ENCODE measurements at regions of chr2 and their contacts with region 1.

Region 1: GRCh38 chr2:17479875-17480274 is 38.4 kb downstream of the RAD51AP2 start:
- DNase-seq: peak; percentile 59
- H3K4me3 ChIP-seq: no peak overlapping the region
- H3K27ac ChIP-seq: no peak overlapping the region
- H3K4me1 ChIP-seq: peaks cover 33% of the 10 kb centered on the region
- H3K27me3 ChIP-seq: no peaks in the 10 kb centered on the region
- CTCF ChIP-seq: no peak

Region 2: DNA sequence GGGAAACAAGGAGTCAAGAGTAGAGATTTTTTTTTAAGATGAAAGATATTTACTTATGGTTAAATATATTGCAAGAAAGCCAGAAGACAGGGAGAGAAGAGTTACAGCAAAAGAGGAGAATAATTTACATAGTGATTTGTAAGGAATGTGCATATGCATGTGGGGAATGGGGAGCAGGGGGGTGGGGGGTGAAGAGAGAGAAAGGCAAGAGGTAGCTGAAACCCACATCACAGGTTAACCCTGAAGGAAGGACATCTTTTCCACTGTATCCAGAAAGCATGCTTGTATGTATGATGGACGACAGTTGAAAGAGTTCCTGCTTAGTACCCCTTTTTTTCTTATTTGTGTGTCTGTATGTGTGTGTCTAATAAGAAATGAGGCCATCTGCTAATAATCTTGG is 333.5 kb before region 1 on chr2:
- CTCF ChIA-PET with region 1: no interaction called
- dilution Hi-C with region 1: no loop called
- in situ Hi-C with region 1: no loop called
- intact Hi-C with region 1: no loop called
- DNase-seq: no peak
- H3K4me3 ChIP-seq: no peak overlapping the region
- H3K27ac ChIP-seq: no peak overlapping the region
- H3K4me1 ChIP-seq: no peaks in the 10 kb centered on the region
- H3K27me3 ChIP-seq: no peaks in the 10 kb centered on the region
- CTCF ChIP-seq: no peak

Region 3: DNA sequence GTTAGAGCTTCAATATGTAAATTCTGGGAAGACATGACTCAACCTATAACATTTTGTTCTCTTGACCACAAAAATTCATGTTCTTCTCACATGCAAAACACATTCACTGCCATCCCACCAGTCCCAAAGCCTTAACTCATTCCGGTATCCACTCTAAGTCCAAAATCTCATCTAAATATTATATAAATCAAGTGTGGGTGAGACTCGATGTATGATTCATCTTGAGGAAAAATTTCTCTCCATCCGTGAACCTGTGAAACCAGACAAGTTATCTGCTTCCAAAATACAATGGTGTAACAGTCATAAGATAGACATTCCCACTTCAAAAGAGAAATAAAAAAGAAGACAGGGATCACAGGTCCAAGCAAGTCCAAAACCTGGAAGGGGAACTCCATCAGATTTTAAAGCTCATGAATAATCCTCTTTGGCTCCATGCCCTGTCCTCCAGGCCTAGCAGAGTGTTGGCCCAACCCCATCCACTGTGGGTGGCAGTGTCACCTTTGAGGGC is 62.9 kb before region 1 on chr2:
- CTCF ChIA-PET with region 1: no interaction called
- dilution Hi-C with region 1: no loop called
- in situ Hi-C with region 1: no loop called
- intact Hi-C with region 1: no loop called
- DNase-seq: peak; percentile 99
- H3K4me3 ChIP-seq: no peak overlapping the region
- H3K27ac ChIP-seq: peak overlapping the region; percentile 89
- H3K4me1 ChIP-seq: peaks cover 21% of the 10 kb centered on the region
- H3K27me3 ChIP-seq: no peaks in the 10 kb centered on the region
- CTCF ChIP-seq: no peak

Region 4: DNA sequence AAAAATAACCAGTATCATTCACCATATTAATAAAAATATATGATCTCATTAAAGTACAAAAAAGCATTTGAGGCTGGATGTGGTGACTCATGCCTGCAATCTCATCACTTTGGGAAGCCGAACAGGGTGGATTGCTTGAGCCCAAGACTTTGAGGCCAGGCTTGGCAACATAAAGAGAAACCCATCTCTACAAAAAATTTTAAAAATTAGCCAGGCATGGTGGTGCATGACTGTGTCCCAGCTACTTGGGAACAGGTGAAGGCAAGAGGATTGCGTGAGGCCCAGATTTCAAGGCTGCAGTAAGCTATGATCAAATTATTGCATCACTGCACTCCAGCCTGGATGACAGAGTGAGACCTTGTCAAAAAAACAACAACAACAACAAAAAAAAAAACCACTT is 37.5 kb before region 1 on chr2:
- CTCF ChIA-PET with region 1: no interaction called
- dilution Hi-C with region 1: no loop called
- in situ Hi-C with region 1: no loop called
- intact Hi-C with region 1: no loop called
- DNase-seq: peak; percentile 68
- H3K4me3 ChIP-seq: no peak overlapping the region
- H3K27ac ChIP-seq: no peak overlapping the region
- H3K4me1 ChIP-seq: peaks cover 5% of the 10 kb centered on the region
- H3K27me3 ChIP-seq: no peaks in the 10 kb centered on the region
- CTCF ChIP-seq: no peak

Region 5: DNA sequence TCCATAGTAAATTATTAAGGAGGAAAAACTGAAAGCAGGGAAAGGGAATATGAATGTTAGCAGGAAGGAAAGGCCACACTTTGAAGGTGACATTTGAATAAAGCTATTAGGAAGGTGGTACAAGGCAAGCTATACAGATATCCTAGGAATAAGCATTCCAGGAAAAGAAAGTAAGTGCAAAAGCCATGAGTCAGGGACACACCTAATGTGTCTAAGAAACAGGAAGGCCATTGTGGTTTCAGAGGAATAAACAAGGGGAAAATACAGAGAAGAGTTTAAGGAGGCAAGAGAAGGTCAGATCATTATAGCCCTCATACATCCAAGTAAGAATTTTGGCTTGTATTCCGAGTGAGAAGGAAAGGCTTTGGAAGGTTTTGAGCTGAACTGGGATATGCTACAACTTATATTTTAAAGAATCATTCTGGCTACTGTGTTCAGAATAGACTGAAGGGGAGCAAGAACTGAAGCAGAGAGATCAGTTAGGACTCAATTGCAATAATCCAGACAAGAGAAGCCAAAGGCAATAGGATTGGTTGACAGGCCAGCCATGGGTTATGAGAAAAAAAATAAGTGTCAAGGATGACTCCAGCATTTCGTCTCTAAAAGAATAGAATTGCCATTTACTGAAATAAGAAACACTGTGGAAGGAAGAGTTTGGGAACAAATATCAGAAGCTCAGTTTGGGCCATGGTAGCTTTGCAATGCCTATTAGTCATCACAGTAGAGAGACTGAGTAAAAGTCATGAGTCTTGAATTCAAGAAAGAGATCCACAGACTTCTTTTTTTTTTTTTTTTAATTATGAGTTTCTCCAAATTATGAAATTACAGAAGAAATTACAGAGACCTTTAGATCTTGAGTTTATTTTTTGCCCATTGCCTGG is 27.1 kb after region 1 on chr2:
- CTCF ChIA-PET with region 1: no interaction called
- dilution Hi-C with region 1: no loop called
- in situ Hi-C with region 1: no loop called
- intact Hi-C with region 1: no loop called
- DNase-seq: peak; percentile 83
- H3K4me3 ChIP-seq: no peak overlapping the region
- H3K27ac ChIP-seq: peak overlapping the region; percentile 87
- H3K4me1 ChIP-seq: peaks cover 14% of the 10 kb centered on the region
- H3K27me3 ChIP-seq: no peaks in the 10 kb centered on the region
- CTCF ChIP-seq: no peak

Region 6: DNA sequence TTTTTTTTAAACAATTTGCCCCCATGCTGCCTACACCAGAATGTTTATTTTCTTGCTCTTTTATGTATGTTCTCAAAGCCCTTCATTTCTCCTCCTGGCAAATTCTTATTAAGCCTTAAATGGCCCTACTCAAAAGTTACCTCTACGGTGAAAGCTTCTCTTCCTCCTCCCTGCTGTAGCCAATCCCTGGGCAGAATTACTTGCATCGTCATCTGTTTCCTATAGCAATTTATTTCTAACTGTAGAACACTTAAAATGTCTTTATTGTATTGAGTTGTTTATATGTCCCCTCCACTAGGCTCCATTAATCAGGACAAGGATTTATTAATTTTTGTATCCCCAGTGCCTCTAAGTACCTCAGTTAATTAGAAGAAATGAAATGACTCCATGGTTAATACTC is 40.9 kb after region 1 on chr2:
- CTCF ChIA-PET with region 1: no interaction called
- dilution Hi-C with region 1: loop called (anchors 5 kb)
- in situ Hi-C with region 1: no loop called
- intact Hi-C with region 1: no loop called
- DNase-seq: no peak
- H3K4me3 ChIP-seq: no peak overlapping the region
- H3K27ac ChIP-seq: no peak overlapping the region
- H3K4me1 ChIP-seq: peaks cover 7% of the 10 kb centered on the region
- H3K27me3 ChIP-seq: no peaks in the 10 kb centered on the region
- CTCF ChIP-seq: no peak